ENCODE measurements at regions of chr2 and their contacts with region 1.

Region 1: GRCh38 chr2:207473049-207473930 is 56.5 kb upstream of the CREB1 start:
- DNase-seq: peak; percentile 71
- ATAC-seq: peak; percentile 94
- H3K4me3 Mint-ChIP-seq: no peak overlapping the region
- H3K27ac Mint-ChIP-seq: no peak overlapping the region
- H3K4me1 Mint-ChIP-seq: peaks cover 16% of the 10 kb centered on the region
- H3K27me3 Mint-ChIP-seq: no peaks in the 10 kb centered on the region

Region 2: GRCh38 chr2:206392118-206392517 is 1081.2 kb before region 1 on chr2:
- CTCF ChIA-PET with region 1: no interaction called
- POLR2A ChIA-PET with region 1: no interaction called
- intact Hi-C with region 1: loop called in 1 of 2 experiments (anchors 5 kb)
- DNase-seq: peak; percentile 58
- ATAC-seq: peak; percentile 58
- H3K4me3 Mint-ChIP-seq: no peak overlapping the region
- H3K27ac Mint-ChIP-seq: no peak overlapping the region
- H3K4me1 Mint-ChIP-seq: no peaks in the 10 kb centered on the region
- H3K27me3 Mint-ChIP-seq: no peaks in the 10 kb centered on the region

Region 3: GRCh38 chr2:206693399-206694137 is 779.7 kb before region 1 on chr2:
- CTCF ChIA-PET with region 1: interaction called, 3 read pairs
- POLR2A ChIA-PET with region 1: no interaction called
- intact Hi-C with region 1: loop called (anchors 1 kb)
- DNase-seq: peak; percentile 23
- ATAC-seq: peak; percentile 63
- H3K4me3 Mint-ChIP-seq: no peak overlapping the region
- H3K27ac Mint-ChIP-seq: no peak overlapping the region
- H3K4me1 Mint-ChIP-seq: peaks cover 3% of the 10 kb centered on the region
- H3K27me3 Mint-ChIP-seq: no peaks in the 10 kb centered on the region

Region 4: DNA sequence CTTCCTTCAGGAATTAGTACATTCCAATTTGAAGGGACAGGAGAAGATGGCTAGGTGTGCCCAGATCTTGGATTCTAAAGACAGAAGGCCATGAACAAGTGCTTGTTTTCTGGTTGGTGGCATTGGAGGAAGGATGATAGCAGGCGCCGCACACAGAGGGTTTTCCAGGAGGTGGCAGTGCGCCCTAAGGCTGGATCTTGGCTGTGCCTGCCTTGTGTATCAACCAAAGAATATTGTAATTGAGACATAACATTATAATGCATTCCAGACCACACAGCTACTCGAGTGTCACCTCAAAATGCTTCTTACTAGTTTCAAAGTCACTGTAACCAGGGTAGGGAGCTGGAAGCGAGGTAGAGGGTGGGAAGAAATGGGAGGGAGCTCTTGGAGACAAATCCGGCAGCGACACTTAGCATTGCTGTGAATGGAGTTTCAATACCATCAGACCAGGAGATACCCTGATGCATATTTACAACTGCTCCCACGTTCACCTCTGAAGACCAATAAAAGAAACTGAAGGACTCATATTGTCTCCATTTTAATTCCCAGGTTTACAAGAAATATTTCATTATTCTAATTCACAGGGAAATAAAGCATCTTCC is 491.4 kb before region 1 on chr2:
- CTCF ChIA-PET with region 1: interaction called, 23 read pairs
- POLR2A ChIA-PET with region 1: no interaction called
- intact Hi-C with region 1: loop called (anchors 1 kb)
- DNase-seq: peak; percentile 76
- ATAC-seq: peak; percentile 80
- H3K4me3 Mint-ChIP-seq: no peak overlapping the region
- H3K27ac Mint-ChIP-seq: no peak overlapping the region
- H3K4me1 Mint-ChIP-seq: peaks cover 19% of the 10 kb centered on the region
- H3K27me3 Mint-ChIP-seq: no peaks in the 10 kb centered on the region

Region 5: DNA sequence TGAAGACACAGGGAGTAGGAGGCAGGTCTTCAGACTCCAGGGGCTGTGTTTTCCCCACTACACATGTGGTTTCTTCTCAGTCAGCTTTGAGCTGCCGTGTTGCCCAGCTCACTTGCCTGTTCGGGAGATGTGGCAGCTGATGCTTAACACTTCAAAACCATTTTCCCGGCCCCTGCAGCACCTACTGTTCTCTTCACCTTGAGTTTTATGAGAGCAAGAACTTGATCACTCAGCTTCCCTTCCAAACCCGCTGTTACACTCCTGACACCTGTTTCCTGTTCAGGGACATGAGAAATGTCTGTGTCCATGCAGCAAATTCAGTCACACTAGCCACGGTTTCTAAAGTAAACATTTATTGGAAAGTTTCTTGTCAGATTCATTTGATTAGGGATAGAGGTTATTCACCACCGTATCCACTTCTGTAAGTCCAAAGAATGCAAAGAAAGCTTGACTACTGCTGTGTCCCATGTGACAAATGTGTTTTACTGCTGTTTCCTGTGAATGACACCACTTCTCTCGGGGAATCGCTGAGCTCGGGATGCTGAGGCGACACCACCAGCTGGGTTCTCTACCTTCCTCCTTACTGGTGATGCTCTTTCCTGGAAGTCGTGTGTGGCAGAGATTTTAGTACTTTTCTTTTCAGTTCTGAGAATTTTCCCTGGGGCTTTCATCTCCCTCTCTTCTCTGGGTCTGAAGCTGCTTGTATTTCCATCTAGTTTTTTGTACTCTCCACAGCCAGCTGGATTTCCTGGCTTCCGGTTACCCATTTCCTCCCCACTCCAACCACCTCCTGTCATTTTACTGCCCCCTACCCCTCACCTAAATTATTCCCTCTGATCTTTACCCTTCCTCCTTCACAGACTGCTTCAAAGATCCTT is 399.2 kb before region 1 on chr2:
- CTCF ChIA-PET with region 1: interaction called, 12 read pairs
- POLR2A ChIA-PET with region 1: no interaction called
- intact Hi-C with region 1: no loop called
- DNase-seq: peak; percentile 61
- ATAC-seq: peak; percentile 80
- H3K4me3 Mint-ChIP-seq: peak overlapping the region; percentile 45
- H3K27ac Mint-ChIP-seq: peak overlapping the region; percentile 87
- H3K4me1 Mint-ChIP-seq: peaks cover 34% of the 10 kb centered on the region
- H3K27me3 Mint-ChIP-seq: peaks cover 5% of the 10 kb centered on the region

Region 6: GRCh38 chr2:207143215-207144172 is 329.8 kb before region 1 on chr2:
- CTCF ChIA-PET with region 1: interaction called, 10 read pairs
- POLR2A ChIA-PET with region 1: no interaction called
- intact Hi-C with region 1: loop called in 1 of 2 experiments (anchors 2 kb)
- DNase-seq: peak; percentile 69
- ATAC-seq: peak; percentile 61
- H3K4me3 Mint-ChIP-seq: peak overlapping the region; percentile 66
- H3K27ac Mint-ChIP-seq: peak overlapping the region; percentile 97
- H3K4me1 Mint-ChIP-seq: peaks cover 66% of the 10 kb centered on the region
- H3K27me3 Mint-ChIP-seq: no peaks in the 10 kb centered on the region

Region 7: GRCh38 chr2:207238831-207239701 is 234.2 kb before region 1 on chr2:
- CTCF ChIA-PET with region 1: no interaction called
- POLR2A ChIA-PET with region 1: no interaction called
- intact Hi-C with region 1: loop called (anchors 5 kb)
- DNase-seq: peak; percentile 70
- ATAC-seq: peak; percentile 28
- H3K4me3 Mint-ChIP-seq: no peak overlapping the region
- H3K27ac Mint-ChIP-seq: peak overlapping the region; percentile 80
- H3K4me1 Mint-ChIP-seq: peaks cover 19% of the 10 kb centered on the region
- H3K27me3 Mint-ChIP-seq: no peaks in the 10 kb centered on the region

Region 8: DNA sequence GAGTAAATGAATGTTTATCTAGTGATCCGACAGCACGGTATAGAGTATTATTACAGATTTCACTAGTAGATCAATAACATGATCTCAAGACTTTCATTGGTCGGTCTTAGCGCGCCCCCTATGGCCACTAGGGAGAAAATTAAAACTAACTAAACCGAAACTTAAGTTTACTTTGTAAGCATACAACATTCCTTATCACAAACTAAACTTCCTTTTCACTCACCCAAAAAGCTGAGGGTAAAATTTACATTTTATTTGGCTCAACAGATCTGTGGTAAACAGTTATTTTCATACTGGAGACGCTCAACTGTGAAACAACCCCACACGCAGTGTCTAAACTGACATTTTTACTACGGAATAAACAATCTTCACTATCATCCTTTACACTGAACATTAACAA is 1734.9 kb after region 1 on chr2:
- CTCF ChIA-PET with region 1: no interaction called
- POLR2A ChIA-PET with region 1: no interaction called
- intact Hi-C with region 1: no loop called
- DNase-seq: peak; percentile 58
- ATAC-seq: no peak
- H3K4me3 Mint-ChIP-seq: peak overlapping the region; percentile 19
- H3K27ac Mint-ChIP-seq: no peak overlapping the region
- H3K4me1 Mint-ChIP-seq: no peaks in the 10 kb centered on the region
- H3K27me3 Mint-ChIP-seq: no peaks in the 10 kb centered on the region